PC-9 (cell line): ENCODE measurements at regions of chr2 and their contacts with region 1.

Region 1: GRCh38 chr2:240021488-240022104 is 3.5 kb downstream of the NDUFA10 start:
- DNase-seq: peak; percentile 47 to 75
- H3K4me3 ChIP-seq: no peak overlapping the region
- H3K27ac ChIP-seq: no peak overlapping the region
- H3K4me1 ChIP-seq: peaks cover 17% of the 10 kb centered on the region
- H3K27me3 ChIP-seq: no peaks in the 10 kb centered on the region
- CTCF ChIP-seq: peak; percentile 89

Region 2: GRCh38 chr2:239902749-239903201 is 118.8 kb before region 1 on chr2:
- CTCF ChIA-PET with region 1: no interaction called
- POLR2A ChIA-PET with region 1: no interaction called
- intact Hi-C with region 1: no loop called
- DNase-seq: no peak
- H3K4me3 ChIP-seq: no peak overlapping the region
- H3K27ac ChIP-seq: no peak overlapping the region
- H3K4me1 ChIP-seq: no peaks in the 10 kb centered on the region
- H3K27me3 ChIP-seq: peaks cover 81% of the 10 kb centered on the region
- CTCF ChIP-seq: no peak

Region 3: DNA sequence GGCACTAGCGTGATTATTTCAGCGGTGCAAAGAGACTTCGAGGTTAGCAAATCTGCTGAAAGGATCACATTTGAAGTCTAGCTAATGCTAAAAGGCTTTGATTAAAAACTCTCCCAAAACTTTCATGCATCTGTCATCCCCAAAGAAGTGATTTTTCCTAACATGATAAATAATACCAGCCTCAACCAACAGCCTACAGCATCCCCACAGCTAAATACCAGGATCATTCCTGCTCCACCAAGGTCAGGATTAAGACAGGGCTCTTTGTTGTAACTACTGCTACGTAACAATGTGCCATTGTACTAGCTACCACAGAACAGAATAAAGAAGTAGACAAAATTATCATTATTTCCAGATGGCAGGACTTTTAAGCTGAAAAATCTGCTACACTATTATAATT is 30.1 kb after region 1 on chr2:
- CTCF ChIA-PET with region 1: no interaction called
- POLR2A ChIA-PET with region 1: interaction called, 25 read pairs
- intact Hi-C with region 1: no loop called
- DNase-seq: no peak
- H3K4me3 ChIP-seq: no peak overlapping the region
- H3K27ac ChIP-seq: no peak overlapping the region
- H3K4me1 ChIP-seq: no peaks in the 10 kb centered on the region
- H3K27me3 ChIP-seq: peaks cover 99% of the 10 kb centered on the region
- CTCF ChIP-seq: no peak

Region 4: DNA sequence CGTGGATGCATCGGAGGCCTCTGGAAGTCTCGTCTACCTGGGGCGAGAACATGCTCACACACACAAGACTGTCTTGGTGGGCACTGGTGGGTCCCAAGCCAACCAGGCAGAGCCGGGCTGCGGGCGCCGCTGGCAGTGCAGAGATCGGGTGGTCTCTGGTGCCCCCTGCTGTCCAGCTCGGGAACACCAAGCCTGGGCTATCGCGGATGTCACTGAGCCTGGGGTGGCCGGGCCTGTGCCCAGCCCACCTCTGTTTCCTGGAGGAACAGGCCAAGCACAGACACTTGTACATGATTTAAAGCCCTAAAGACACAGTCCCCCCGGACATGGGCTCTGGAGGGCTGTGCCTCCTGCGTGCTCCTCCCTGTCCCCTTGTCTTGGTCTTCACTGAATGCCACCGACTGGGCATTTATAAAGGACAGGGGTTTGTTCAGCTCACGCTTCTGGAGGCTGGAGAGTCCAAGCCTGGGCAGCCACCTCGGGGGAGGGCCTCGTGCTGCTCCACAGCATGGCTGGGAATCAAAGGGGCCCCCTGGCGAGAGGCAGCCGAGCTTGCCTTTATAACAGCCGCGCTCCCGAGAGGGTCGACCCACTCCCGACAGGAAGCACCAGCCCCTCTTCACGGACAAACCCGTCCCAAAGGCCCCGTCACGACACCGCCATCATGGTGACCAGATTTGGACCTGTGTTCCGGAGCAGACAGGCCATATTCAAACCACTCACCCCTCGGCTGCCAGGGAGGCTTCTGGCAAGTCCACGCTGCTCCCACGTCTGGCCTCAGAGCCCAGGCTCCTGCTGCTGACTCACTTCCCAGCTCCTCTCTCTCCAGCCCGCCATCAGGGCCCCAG is 122.4 kb after region 1 on chr2:
- CTCF ChIA-PET with region 1: interaction called, 5 read pairs
- POLR2A ChIA-PET with region 1: no interaction called
- intact Hi-C with region 1: loop called (anchors 10 kb)
- DNase-seq: peak; percentile 45 to 87
- H3K4me3 ChIP-seq: no peak overlapping the region
- H3K27ac ChIP-seq: no peak overlapping the region
- H3K4me1 ChIP-seq: no peaks in the 10 kb centered on the region
- H3K27me3 ChIP-seq: peaks cover 59% of the 10 kb centered on the region
- CTCF ChIP-seq: peak; percentile 98

Region 5: GRCh38 chr2:240749516-240749915 is 727.9 kb after region 1 on chr2:
- CTCF ChIA-PET with region 1: interaction called, 11 read pairs
- POLR2A ChIA-PET with region 1: no interaction called
- intact Hi-C with region 1: no loop called
- DNase-seq: no peak
- H3K4me3 ChIP-seq: no peak overlapping the region
- H3K27ac ChIP-seq: no peak overlapping the region
- H3K4me1 ChIP-seq: no peaks in the 10 kb centered on the region
- H3K27me3 ChIP-seq: peaks cover 98% of the 10 kb centered on the region
- CTCF ChIP-seq: no peak